ENCODE measurements at regions of chrX and their contacts with region 1.

Region 1: GRCh38 chrX:37745354-37745753 is 34.5 kb upstream of the CYBB start:
- DNase-seq: peak; percentile 81
- H3K4me3 Mint-ChIP-seq: no peak overlapping the region
- H3K27ac Mint-ChIP-seq: no peak overlapping the region
- H3K4me1 Mint-ChIP-seq: peaks cover 16% of the 10 kb centered on the region
- H3K27me3 Mint-ChIP-seq: no peaks in the 10 kb centered on the region

Region 2: DNA sequence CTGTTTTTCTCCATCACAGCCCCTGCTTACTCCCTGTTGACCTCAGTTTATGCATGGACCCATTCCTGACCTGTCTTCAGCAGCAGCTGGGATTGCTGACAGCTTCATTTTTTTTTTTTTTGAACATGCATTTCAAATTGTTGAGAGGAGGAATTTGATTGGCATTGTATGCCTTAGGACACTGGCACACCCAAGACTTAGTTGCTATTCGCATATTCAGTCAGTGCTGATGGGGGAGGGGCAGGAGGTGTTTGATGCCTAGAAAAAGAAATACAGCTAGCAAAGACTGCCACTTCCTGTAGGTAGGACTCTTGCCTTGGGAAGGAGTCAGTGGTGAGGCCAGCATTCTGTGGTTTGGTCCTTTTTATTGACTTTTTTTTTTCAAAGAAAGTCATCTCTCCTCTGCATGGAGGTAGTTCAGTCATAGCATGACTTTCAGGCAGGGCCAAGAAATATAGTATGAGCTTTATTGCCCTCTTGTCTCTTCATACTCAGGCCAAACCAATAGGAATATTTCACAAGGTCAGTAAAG is 93.4 kb before region 1 on chrX:
- CTCF ChIA-PET with region 1: no interaction called
- POLR2A ChIA-PET with region 1: no interaction called
- intact Hi-C with region 1: no loop called
- DNase-seq: peak; percentile 9
- H3K4me3 Mint-ChIP-seq: no peak overlapping the region
- H3K27ac Mint-ChIP-seq: no peak overlapping the region
- H3K4me1 Mint-ChIP-seq: no peaks in the 10 kb centered on the region
- H3K27me3 Mint-ChIP-seq: no peaks in the 10 kb centered on the region

Region 3: DNA sequence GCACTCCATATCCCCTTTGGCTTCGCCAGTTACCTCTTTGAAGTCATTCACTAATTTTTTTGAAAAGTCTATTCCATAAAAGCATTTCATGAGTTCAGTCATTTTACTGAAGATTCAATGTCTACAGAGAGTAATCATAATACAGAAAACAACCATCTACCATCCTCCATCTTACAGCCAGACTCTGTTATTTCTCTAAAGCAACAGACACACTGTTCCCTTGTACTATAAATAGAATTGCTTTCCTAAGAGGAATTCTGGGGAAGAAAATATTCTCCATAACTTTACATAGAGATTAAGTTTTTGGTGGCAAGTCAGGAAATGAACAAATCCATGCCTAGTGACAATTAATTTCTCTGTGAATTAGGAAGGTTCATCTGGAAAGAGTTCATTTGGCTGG is 22.8 kb before region 1 on chrX:
- CTCF ChIA-PET with region 1: no interaction called
- POLR2A ChIA-PET with region 1: no interaction called
- intact Hi-C with region 1: no loop called
- DNase-seq: no peak
- H3K4me3 Mint-ChIP-seq: no peak overlapping the region
- H3K27ac Mint-ChIP-seq: no peak overlapping the region
- H3K4me1 Mint-ChIP-seq: no peaks in the 10 kb centered on the region
- H3K27me3 Mint-ChIP-seq: no peaks in the 10 kb centered on the region

Region 4: GRCh38 chrX:37787423-37787869 is 42.1 kb after region 1 on chrX:
- CTCF ChIA-PET with region 1: interaction called, 3 read pairs
- POLR2A ChIA-PET with region 1: no interaction called
- intact Hi-C with region 1: loop called (anchors 5 kb)
- DNase-seq: no peak
- H3K4me3 Mint-ChIP-seq: no peak overlapping the region
- H3K27ac Mint-ChIP-seq: peak overlapping the region; percentile 40
- H3K4me1 Mint-ChIP-seq: peaks cover 19% of the 10 kb centered on the region
- H3K27me3 Mint-ChIP-seq: no peaks in the 10 kb centered on the region

Region 5: DNA sequence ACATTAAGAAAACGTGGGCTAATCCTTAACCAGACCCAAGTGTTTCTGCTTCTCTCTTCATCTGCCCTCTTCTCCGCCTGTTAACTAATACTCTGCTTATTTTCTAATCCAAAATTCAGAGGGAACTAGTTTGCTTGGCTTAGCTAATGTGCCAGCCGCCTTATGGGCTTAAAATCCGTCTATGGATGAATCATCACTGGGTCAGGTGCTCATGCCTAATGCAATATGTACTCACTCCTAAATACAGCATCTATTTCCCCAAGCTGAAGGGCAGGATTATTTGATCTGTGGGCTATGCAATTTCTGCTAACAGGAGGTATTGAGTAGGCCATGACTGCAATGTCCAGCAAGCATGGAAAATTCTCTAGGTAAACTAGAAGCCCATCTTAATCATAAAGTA is 89.6 kb after region 1 on chrX:
- CTCF ChIA-PET with region 1: interaction called, 21 read pairs
- POLR2A ChIA-PET with region 1: no interaction called
- intact Hi-C with region 1: no loop called
- DNase-seq: no peak
- H3K4me3 Mint-ChIP-seq: no peak overlapping the region
- H3K27ac Mint-ChIP-seq: no peak overlapping the region
- H3K4me1 Mint-ChIP-seq: peaks cover 2% of the 10 kb centered on the region
- H3K27me3 Mint-ChIP-seq: no peaks in the 10 kb centered on the region

Region 6: DNA sequence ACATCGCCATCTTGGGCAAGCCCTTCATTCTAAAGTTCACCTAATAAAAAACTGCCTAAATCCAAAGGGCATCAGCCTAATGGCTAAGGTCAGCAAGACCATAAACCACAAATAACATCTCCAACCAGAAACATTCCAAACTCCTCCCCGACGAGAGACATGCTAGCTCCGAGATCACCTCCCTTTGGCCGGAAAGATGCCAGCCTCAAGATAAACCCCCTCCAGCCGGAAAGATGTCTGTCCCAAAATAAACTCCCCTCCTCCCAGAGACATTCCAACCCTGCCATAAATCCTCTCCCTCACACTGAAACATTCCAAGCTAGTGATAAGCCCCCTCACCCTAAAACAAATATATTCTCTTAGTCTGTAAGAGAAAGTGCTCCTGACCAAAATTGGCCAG is 115.4 kb after region 1 on chrX:
- CTCF ChIA-PET with region 1: no interaction called
- POLR2A ChIA-PET with region 1: no interaction called
- intact Hi-C with region 1: no loop called
- DNase-seq: no peak
- H3K4me3 Mint-ChIP-seq: no peak overlapping the region
- H3K27ac Mint-ChIP-seq: no peak overlapping the region
- H3K4me1 Mint-ChIP-seq: no peaks in the 10 kb centered on the region
- H3K27me3 Mint-ChIP-seq: no peaks in the 10 kb centered on the region

Region 7: DNA sequence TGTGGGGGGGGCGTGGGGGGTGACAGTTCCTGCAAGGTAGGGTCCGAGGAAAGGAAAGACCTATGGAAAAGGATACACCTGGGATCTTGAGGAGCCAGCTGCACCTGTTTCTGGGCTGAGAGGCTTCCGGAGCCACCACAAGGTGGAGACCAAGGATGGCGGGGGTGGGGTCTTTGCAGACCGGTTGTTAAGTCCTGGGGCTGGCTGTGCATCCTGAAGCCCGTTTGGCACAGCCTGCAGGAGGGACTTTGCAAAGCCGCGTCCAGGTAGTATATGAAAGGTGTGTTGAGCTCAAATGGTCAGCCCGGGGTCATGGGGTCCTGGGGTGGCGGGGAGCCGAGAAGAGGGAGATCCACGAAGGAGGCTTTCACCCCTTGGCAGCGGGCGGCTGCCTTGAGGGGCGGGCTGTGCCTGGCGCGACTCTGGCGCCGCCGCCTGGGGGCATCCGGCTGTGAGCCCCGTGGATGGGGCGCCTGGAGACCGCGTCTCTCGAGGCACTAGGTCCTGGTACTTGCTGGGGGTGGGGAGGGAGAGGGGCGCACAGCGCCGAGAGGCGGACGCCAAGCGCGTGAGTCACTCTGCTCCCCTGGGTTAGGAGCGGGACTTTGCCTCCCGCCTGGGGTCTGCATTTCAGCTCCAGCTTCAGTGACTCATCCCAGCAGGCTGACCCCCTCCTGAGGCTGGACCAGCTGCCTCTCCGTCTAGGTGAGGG is 160.2 kb after region 1 on chrX:
- CTCF ChIA-PET with region 1: no interaction called
- POLR2A ChIA-PET with region 1: no interaction called
- intact Hi-C with region 1: loop called (anchors 5 kb)
- DNase-seq: peak; percentile 20
- H3K4me3 Mint-ChIP-seq: no peak overlapping the region
- H3K27ac Mint-ChIP-seq: no peak overlapping the region
- H3K4me1 Mint-ChIP-seq: peaks cover 3% of the 10 kb centered on the region
- H3K27me3 Mint-ChIP-seq: peaks cover 20% of the 10 kb centered on the region

Region 8: GRCh38 chrX:38008619-38009018 is 263.3 kb after region 1 on chrX:
- CTCF ChIA-PET with region 1: no interaction called
- POLR2A ChIA-PET with region 1: no interaction called
- intact Hi-C with region 1: no loop called
- DNase-seq: no peak
- H3K4me3 Mint-ChIP-seq: no peak overlapping the region
- H3K27ac Mint-ChIP-seq: no peak overlapping the region
- H3K4me1 Mint-ChIP-seq: peaks cover 2% of the 10 kb centered on the region
- H3K27me3 Mint-ChIP-seq: peaks cover 8% of the 10 kb centered on the region

Region 9: GRCh38 chrX:38327007-38327774 is 581.8 kb after region 1 on chrX and contains the start of gene RPGR:
- CTCF ChIA-PET with region 1: interaction called, 4 read pairs
- POLR2A ChIA-PET with region 1: no interaction called
- intact Hi-C with region 1: loop called (anchors 10 kb)
- DNase-seq: peak; percentile 94
- H3K4me3 Mint-ChIP-seq: peak within 1 kb of the TSS; percentile 87
- H3K27ac Mint-ChIP-seq: peak within 1 kb of the TSS; percentile 85
- H3K4me1 Mint-ChIP-seq: peaks cover 13% of the 10 kb centered on the region
- H3K27me3 Mint-ChIP-seq: no peaks in the 10 kb centered on the region
- total RNA-seq, gene RPGR: 5.7 to 8.3 TPM